ENCODE measurements at regions of chr17 and their contacts with region 1.

Region 1: GRCh38 chr17:12020642-12021622 is at the start of gene MAP2K4:
- DNase-seq: peak; percentile 86 to 97 (median 92)
- H3K4me3 ChIP-seq: peak within 1 kb of the TSS; percentile 54 to 98 (median 81)
- H3K27ac ChIP-seq: peak within 1 kb of the TSS in 53 of 59 donors; percentile 5 to 95 (median 77)
- H3K27me3 ChIP-seq: no peaks in the 10 kb centered on the region
- CTCF ChIP-seq: peak in 15 of 56 donors; percentile 9 to 42 (median 21)
- total RNA-seq, gene MAP2K4: 73.7 to 171 (median 137) TPM

Region 2: DNA sequence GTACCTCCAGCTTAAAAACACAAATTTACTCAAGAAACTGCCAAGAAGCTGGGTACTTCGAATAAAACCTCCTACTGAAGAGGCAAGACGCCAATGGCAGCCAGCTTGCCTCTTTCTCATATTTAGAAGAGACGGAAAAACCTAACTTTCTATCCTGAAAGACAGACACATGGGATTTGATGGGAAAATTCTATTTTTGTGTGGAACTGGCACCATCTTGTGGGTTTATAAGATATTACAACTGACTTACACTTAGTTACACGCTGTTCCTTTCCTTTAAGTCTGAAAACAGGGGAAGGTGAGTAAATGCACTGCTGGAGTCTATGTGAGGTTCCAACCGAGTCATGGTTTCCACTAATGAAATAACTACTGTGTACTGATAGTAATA is 34.0 kb before region 1 on chr17:
- intact Hi-C with region 1: no loop called
- DNase-seq: no peak
- H3K4me3 ChIP-seq: no peak overlapping the region
- H3K27ac ChIP-seq: peak overlapping the region in 1 of 59 donors; percentile 44
- H3K27me3 ChIP-seq: no peaks in the 10 kb centered on the region
- CTCF ChIP-seq: peak; percentile 22 to 84 (median 66)

Region 3: GRCh38 chr17:12068946-12069345 is 48.0 kb after region 1 on chr17:
- intact Hi-C with region 1: loop called in 1 of 2 experiments (anchors 5 kb)
- DNase-seq: no peak
- H3K4me3 ChIP-seq: peak overlapping the region in 30 of 59 donors; percentile 5 to 64 (median 52)
- H3K27ac ChIP-seq: peak overlapping the region; percentile 17 to 99 (median 88)
- H3K27me3 ChIP-seq: no peaks in the 10 kb centered on the region
- CTCF ChIP-seq: no peak

Region 4: DNA sequence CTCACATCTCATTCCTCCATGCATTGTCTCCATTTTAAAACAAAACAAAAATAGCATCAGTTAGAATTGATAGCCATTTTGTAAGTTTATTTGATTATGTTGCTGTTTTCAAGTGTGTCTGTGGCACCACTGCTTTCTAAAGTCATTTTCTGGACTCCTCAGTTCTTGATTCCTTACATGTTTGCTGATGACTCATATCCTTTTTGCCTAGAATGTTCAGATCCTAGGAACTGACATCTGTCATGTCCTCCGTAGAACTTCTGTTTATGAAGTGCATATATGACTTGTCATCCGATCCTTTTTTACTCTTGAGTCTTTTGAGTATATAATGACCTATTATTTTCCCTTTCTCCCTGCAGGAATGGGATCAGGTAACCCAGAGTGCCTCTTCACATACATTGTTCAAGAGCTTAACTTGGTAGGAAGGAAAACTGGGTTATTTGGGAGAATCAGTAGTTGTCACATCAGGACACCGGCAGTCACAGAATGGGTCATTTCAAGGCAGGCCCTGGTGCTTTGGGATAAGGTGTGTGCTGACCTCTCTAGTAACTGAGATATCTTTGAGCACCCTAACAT is 69.0 kb after region 1 on chr17:
- intact Hi-C with region 1: no loop called
- DNase-seq: no peak
- H3K4me3 ChIP-seq: no peak overlapping the region
- H3K27ac ChIP-seq: no peak overlapping the region
- H3K27me3 ChIP-seq: no peaks in the 10 kb centered on the region
- CTCF ChIP-seq: no peak

Region 5: DNA sequence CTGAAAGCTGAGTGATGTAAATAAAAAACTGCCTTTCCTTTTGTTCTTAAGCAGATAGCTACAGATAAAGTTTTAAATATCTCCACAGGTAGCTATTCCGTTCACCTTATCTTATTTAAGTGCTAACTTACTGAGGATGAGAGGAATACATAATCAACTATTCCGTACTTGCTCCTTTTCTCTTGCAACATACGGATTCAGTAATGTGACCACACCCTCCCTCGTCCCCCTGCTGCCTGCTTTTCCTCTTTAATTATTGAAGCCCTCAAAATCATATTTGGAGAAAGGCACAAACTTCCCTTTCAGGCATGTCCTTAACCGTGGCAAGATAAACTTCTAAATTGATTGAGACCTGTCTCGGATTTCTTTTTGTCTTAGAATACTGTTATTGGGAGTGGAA is 101.1 kb after region 1 on chr17:
- intact Hi-C with region 1: no loop called
- DNase-seq: no peak
- H3K4me3 ChIP-seq: no peak overlapping the region
- H3K27ac ChIP-seq: no peak overlapping the region
- H3K27me3 ChIP-seq: no peaks in the 10 kb centered on the region
- CTCF ChIP-seq: no peak